CD8-positive, alpha-beta T cell (primary cell): ENCODE measurements at regions of chr20 and their contacts with region 1.

Region 1: DNA sequence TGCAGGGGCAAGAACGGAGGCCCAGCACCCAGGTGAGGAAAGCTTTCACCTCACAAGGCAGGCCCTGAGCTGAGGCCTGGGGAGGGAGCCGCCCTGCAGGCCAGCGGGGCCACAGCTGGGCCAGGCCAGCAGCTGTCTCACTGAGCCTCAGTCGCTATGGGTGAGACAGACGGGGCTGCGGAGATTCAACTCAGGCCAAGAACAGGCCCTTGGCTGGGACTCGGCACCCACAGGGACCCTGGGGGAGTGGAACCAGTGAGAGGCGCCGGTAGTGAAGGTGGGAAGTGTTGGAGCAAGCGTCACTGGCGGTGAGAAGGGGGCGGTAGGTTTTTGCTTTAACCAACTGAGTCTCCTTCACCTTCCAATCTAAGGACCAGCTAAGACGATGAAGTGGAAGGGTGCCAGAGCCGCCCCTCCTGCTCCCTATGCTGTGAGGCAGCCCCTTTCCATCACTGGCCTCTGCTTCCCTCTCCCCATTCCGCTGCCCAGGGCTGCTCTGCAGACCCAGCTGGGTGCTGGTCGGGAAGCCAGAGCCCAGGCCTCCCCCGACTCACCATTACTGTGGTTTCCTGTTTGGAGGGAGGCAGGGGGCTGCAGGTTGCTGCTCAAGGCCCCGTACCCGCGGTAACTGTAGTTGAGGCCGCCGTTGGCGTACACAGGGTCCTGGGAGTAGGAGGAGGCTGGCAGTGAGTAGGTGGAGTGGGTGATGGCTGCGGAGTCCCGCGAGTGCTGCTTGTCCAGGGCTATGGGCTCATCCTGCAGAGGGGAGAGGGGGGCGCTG is 93.7 kb downstream of the ASXL1 start:
- DNase-seq: no peak
- ATAC-seq: no peak
- H3K4me3 ChIP-seq: no peak overlapping the region
- H3K4me3 Mint-ChIP-seq: no peak overlapping the region
- H3K27ac ChIP-seq: no peak overlapping the region
- H3K27ac Mint-ChIP-seq: peak overlapping the region; percentile 84
- H3K4me1 ChIP-seq: peaks cover under 1% of the 10 kb centered on the region
- H3K4me1 Mint-ChIP-seq: peaks cover 10% of the 10 kb centered on the region
- H3K27me3 ChIP-seq: no peaks in the 10 kb centered on the region
- H3K27me3 Mint-ChIP-seq: no peaks in the 10 kb centered on the region
- CTCF ChIP-seq: no peak

Region 2: GRCh38 chr20:31894980-31895675 is 556.7 kb before region 1 on chr20:
- CTCF ChIA-PET with region 1: no interaction called
- POLR2A ChIA-PET with region 1: no interaction called
- intact Hi-C with region 1: no loop called
- DNase-seq: peak in 2 of 9 experiments; percentile 55 to 65
- ATAC-seq: peak; percentile 59
- H3K4me3 ChIP-seq: no peak overlapping the region
- H3K4me3 Mint-ChIP-seq: no peak overlapping the region
- H3K27ac ChIP-seq: no peak overlapping the region
- H3K27ac Mint-ChIP-seq: no peak overlapping the region
- H3K4me1 ChIP-seq: no peaks in the 10 kb centered on the region
- H3K4me1 Mint-ChIP-seq: no peaks in the 10 kb centered on the region
- H3K27me3 ChIP-seq: no peaks in the 10 kb centered on the region
- H3K27me3 Mint-ChIP-seq: peaks cover 16% of the 10 kb centered on the region
- CTCF ChIP-seq: no peak

Region 3: GRCh38 chr20:32437391-32438074 is 14.3 kb before region 1 on chr20:
- CTCF ChIA-PET with region 1: interaction called, 11 read pairs
- POLR2A ChIA-PET with region 1: no interaction called
- intact Hi-C with region 1: no loop called
- DNase-seq: peak in 3 of 9 experiments; percentile 26 to 48 (median 39)
- ATAC-seq: peak; percentile 54
- H3K4me3 ChIP-seq: no peak overlapping the region
- H3K4me3 Mint-ChIP-seq: no peak overlapping the region
- H3K27ac ChIP-seq: no peak overlapping the region
- H3K27ac Mint-ChIP-seq: no peak overlapping the region
- H3K4me1 ChIP-seq: no peaks in the 10 kb centered on the region
- H3K4me1 Mint-ChIP-seq: peaks cover 8% of the 10 kb centered on the region
- H3K27me3 ChIP-seq: no peaks in the 10 kb centered on the region
- H3K27me3 Mint-ChIP-seq: no peaks in the 10 kb centered on the region
- CTCF ChIP-seq: peak; percentile 26

Region 4: DNA sequence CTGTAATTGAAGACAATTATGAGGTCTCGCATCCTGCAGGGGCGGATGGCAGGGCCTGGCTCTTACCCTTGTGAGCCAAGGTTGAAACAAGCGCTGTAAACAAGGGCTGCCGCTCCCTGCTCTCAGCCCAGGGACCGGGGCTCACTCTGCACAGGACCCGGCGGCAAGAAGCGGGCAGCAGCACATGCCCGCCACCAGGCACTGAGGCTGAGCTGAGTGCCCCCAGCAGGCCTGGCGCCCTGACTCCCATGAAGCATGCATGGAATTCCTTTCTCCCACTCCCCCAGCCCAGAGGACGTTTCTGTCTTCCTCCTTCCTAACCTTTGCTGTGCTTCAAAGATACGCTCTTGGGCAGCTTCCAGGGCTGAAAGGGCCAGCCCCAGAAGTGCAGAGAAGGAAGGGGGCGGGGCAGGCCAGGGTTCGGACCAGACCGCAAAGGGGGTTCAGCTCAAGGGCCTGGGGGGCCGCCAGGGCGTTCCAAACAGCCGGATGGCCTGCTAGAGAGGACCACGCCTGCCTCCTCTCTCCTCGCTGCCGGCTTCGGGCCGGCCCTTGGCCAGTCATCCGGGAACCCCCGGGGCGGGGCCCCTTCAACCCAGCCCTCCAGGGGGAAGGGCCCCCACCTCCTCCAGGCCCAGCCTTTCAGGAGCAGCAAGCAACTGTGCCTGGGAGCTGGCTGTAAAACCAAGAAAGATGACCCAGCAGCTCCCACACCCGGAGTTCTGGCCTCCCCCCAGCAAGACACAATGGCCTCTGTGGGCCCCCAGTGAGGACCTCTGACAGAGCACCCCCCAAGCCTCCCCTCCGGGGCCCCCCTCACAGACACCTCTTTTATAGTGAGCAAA is 23.3 kb after region 1 on chr20:
- CTCF ChIA-PET with region 1: no interaction called
- POLR2A ChIA-PET with region 1: no interaction called
- intact Hi-C with region 1: no loop called
- DNase-seq: no peak
- ATAC-seq: no peak
- H3K4me3 ChIP-seq: no peak overlapping the region
- H3K4me3 Mint-ChIP-seq: no peak overlapping the region
- H3K27ac ChIP-seq: peak overlapping the region; percentile 30 to 53
- H3K27ac Mint-ChIP-seq: peak overlapping the region; percentile 91
- H3K4me1 ChIP-seq: peaks cover 45% of the 10 kb centered on the region
- H3K4me1 Mint-ChIP-seq: peaks cover 57% of the 10 kb centered on the region
- H3K27me3 ChIP-seq: no peaks in the 10 kb centered on the region
- H3K27me3 Mint-ChIP-seq: no peaks in the 10 kb centered on the region
- CTCF ChIP-seq: no peak